ENCODE measurements at regions of chr5 and their contacts with region 1.

Region 1: DNA sequence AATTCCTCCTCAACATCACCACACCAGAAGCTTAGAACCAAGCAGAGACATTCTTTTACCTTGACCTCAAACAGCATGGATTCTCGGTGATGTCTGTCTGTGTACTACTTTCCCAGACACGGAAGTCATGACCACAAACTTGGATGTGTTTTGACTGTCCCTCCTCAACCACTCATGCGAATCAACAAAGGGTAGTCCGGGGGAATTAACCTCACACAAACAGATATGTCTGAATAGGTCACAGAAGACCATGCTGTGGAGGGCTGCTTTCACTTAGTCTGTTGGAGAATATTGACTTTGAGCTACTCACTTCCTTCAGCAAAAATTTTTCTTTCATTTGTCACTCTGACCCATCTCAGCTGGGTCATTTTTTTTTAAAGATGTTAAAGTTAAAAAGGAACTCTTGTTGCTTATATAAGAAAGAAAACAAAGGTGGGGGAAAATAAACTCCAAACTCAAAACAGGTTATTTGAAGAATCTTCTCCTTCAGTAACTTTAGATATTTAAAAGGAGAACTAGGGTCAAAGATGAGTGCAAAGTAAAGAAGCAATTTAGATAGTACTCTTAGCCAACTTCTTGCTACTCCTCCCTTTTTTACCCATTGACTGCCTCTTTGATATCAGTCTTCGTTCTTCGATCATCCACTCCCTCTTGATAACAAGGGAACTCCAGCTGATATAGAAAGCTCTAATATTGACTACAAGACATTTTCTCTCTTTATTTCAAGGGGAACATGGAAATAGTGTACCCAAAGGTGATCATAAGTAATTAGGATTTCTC is 343.4 kb upstream of the CDH6 start:
- DNase-seq: no peak
- ATAC-seq: peak; percentile 84
- H3K4me3 ChIP-seq: no peak overlapping the region
- H3K27ac ChIP-seq: no peak overlapping the region
- H3K4me1 ChIP-seq: no peaks in the 10 kb centered on the region
- H3K27me3 ChIP-seq: no peaks in the 10 kb centered on the region
- CTCF ChIP-seq: no peak
- EP300 ChIP-seq: no peak
- POLR2A ChIP-seq: no peak
- RAD21 ChIP-seq: no peak

Region 2: DNA sequence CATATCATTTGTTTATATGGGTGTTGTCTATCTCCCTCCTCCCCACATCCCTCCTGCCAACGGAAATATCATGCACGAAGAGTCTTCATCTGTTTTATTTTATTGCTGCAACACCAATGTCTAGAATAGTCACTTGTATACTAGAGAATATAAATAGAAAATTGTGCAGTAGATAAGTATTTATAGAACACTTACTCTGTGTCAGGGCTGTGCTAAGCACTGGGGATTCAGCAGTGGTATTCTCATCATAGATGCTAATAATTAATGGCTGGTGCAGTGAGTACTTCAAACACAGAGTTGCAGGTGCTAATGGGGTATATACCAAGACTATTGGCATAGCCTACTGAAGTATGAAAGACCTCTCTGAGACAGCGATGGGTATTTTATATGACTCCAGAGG is 10.2 kb before region 1 on chr5:
- CTCF ChIA-PET with region 1: interaction called, 4 read pairs
- POLR2A ChIA-PET with region 1: no interaction called
- RAD21 ChIA-PET with region 1: interaction called, 7 read pairs
- SMC1A ChIA-PET with region 1: interaction called, 15 read pairs
- in situ Hi-C with region 1: no loop called
- intact Hi-C with region 1: no loop called
- DNase-seq: no peak
- ATAC-seq: peak; percentile 66
- H3K4me3 ChIP-seq: no peak overlapping the region
- H3K27ac ChIP-seq: no peak overlapping the region
- H3K4me1 ChIP-seq: no peaks in the 10 kb centered on the region
- H3K27me3 ChIP-seq: no peaks in the 10 kb centered on the region
- CTCF ChIP-seq: no peak
- EP300 ChIP-seq: no peak
- POLR2A ChIP-seq: no peak
- RAD21 ChIP-seq: no peak

Region 3: DNA sequence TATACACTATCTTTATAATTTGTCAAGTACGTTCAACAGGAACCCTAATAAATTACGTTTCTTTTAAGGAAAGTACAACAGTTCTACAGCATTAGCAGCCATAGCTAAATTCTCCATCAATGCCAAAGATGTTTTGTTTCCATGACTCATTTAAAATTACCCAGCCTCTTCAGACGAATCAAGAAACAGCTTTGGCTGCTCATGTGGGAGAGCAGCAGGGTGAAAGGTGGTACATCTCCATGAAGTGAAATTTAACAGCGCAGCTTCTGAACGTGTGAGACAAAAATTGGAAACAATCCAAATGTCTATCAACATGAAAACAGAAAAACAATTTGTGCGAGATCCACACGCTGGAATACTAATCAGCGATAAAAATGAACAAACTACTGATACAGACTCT is 16.0 kb after region 1 on chr5:
- CTCF ChIA-PET with region 1: no interaction called
- POLR2A ChIA-PET with region 1: no interaction called
- RAD21 ChIA-PET with region 1: no interaction called
- SMC1A ChIA-PET with region 1: no interaction called
- in situ Hi-C with region 1: no loop called
- intact Hi-C with region 1: no loop called
- DNase-seq: no peak
- ATAC-seq: no peak
- H3K4me3 ChIP-seq: no peak overlapping the region
- H3K27ac ChIP-seq: no peak overlapping the region
- H3K4me1 ChIP-seq: no peaks in the 10 kb centered on the region
- H3K27me3 ChIP-seq: no peaks in the 10 kb centered on the region
- CTCF ChIP-seq: no peak
- EP300 ChIP-seq: no peak
- POLR2A ChIP-seq: no peak
- RAD21 ChIP-seq: no peak

Region 4: GRCh38 chr5:31492869-31493268 is 642.7 kb after region 1 on chr5:
- CTCF ChIA-PET with region 1: no interaction called
- POLR2A ChIA-PET with region 1: no interaction called
- RAD21 ChIA-PET with region 1: no interaction called
- SMC1A ChIA-PET with region 1: no interaction called
- in situ Hi-C with region 1: no loop called
- intact Hi-C with region 1: no loop called
- DNase-seq: no peak
- ATAC-seq: no peak
- H3K4me3 ChIP-seq: no peak overlapping the region
- H3K27ac ChIP-seq: no peak overlapping the region
- H3K4me1 ChIP-seq: no peaks in the 10 kb centered on the region
- H3K27me3 ChIP-seq: no peaks in the 10 kb centered on the region
- CTCF ChIP-seq: no peak
- EP300 ChIP-seq: no peak
- POLR2A ChIP-seq: no peak
- RAD21 ChIP-seq: no peak

Measured in GM12878 (cell line).